ENCODE measurements at regions of chr16 and their contacts with region 1.

Region 1: DNA sequence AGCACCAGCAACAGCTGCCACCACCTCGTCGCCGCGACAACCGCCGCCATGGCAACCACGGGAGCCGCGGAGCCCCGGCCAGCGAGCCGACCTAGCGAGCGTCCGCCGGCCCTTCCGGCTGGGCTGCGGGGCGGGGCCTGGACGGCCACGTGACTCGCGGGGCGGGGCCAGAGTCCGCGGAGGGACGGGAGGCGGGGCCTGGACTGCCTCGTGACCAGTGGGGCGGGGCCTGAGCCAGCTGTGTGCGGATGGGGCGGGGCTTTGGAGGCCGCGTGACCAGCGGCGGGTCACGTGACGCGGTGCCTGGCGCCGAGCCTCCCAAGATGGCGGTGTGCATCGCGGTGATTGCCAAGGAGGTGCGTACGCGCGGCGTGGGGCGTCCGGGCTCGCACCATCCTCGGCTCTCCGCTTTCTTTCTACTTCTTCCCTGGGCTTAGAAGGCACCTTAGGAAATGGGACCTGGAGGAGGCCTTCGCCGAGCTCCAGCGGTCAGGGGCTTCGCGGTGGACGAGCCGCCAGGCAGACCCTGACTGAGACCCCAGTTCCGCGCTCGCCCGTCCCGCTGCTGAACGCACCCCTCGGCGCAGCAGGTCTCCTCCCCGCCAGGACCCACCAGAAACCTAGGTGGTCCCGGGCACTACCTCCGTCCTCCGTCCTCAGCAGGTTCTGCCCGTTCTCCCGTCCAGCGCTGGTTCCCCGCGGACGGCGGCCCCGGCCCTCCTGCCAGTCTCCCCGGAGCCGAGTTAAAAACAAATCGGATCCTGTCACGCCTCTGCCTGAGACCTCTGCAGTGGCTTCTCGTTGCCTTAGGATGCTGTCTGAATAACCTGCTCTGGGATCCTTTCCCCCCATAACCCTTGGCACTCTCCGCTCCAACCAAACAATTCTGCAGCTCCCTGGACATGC is at the starts of genes GALNS and TRAPPC2L:
- DNase-seq: peak; percentile 100
- ATAC-seq: peak; percentile 93
- H3K4me3 Mint-ChIP-seq: peak within 1 kb of the TSS; percentile 100
- H3K27ac Mint-ChIP-seq: peak within 1 kb of the TSS; percentile 97
- H3K4me1 Mint-ChIP-seq: peaks cover 22% of the 10 kb centered on the region
- H3K27me3 Mint-ChIP-seq: no peaks in the 10 kb centered on the region
- total RNA-seq, gene GALNS: 20.1 TPM
- total RNA-seq, gene TRAPPC2L: 43.3 to 50.7 TPM

Region 2: GRCh38 chr16:88662843-88663606 is 194.1 kb before region 1 on chr16 and contains the start of gene MVD:
- CTCF ChIA-PET with region 1: no interaction called
- POLR2A ChIA-PET with region 1: no interaction called
- intact Hi-C with region 1: loop called in 1 of 2 experiments (anchors 1 kb)
- DNase-seq: peak; percentile 98
- ATAC-seq: peak; percentile 99
- H3K4me3 Mint-ChIP-seq: peak within 1 kb of the TSS; percentile 92
- H3K27ac Mint-ChIP-seq: peak within 1 kb of the TSS; percentile 88
- H3K4me1 Mint-ChIP-seq: peaks cover 14% of the 10 kb centered on the region
- H3K27me3 Mint-ChIP-seq: no peaks in the 10 kb centered on the region
- total RNA-seq, gene MVD: 62.8 to 81.1 TPM

Region 3: DNA sequence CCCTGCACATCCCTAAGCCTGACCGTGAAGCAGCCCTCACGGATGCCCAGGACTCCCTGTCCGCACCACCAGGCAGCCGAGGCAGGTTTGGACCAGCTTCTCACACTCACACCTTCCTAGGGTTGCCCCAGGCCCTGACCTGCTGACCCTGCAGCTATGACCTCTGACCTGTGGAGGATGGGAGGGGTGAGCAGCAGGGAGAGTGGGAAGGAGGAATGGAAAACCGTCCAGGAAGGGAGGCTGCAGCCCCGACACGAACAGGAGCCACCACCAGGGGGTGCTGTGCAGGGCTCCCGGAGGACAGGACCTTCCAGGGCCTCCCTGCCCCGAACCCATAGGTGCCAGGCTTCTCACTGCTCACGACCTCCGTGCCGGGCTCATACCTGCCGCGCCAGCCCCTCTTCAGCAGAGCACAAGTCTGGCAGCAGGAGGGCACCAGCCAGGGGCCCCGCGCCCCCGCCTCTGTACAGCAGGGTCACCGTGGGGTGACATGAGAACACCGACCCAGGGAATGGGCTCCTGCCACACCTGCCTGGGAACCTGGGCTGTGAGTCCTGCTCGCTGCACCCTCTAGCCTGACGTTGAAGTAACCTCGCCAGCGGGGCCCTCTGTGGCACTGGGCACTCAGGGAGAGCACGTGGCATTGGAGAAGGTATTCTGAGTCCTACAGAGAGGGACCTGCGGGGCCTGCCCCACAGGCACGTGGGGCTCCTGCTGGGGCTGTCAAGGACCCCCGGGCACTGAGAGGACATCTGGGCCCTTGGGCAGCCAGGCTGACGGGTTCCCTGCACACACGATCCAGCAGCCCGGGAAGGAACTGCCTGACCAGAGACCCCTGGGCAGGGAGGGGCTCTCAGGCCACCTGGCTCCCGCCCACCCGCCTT is 113.1 kb before region 1 on chr16:
- CTCF ChIA-PET with region 1: interaction called, 3 read pairs
- POLR2A ChIA-PET with region 1: no interaction called
- intact Hi-C with region 1: loop called in 1 of 2 experiments (anchors 2 kb)
- DNase-seq: peak; percentile 86
- ATAC-seq: peak; percentile 32
- H3K4me3 Mint-ChIP-seq: no peak overlapping the region
- H3K27ac Mint-ChIP-seq: no peak overlapping the region
- H3K4me1 Mint-ChIP-seq: peaks cover 30% of the 10 kb centered on the region
- H3K27me3 Mint-ChIP-seq: no peaks in the 10 kb centered on the region

Region 4: DNA sequence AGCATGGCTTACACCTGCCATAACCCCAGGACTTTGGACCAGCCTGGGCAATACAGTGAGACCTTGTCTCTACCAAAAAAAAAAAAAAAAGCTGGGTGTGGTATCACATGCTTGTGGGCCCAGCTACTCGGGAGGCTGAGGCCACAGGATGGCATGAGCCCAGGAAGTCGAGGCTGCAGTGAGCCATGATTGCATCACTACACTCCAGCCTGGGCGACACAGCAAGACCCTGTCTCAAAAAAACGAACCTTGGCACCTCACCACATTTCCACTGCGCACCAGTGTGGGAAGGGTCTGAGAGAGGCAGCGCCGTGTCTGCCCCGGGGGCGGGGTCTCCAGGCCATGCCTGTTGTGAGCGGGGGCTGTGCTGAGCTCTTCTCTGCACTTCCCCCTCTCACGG is 242.8 kb after region 1 on chr16:
- CTCF ChIA-PET with region 1: interaction called, 5 read pairs
- POLR2A ChIA-PET with region 1: no interaction called
- intact Hi-C with region 1: loop called (anchors 5 kb)
- DNase-seq: peak; percentile 63
- ATAC-seq: no peak
- H3K4me3 Mint-ChIP-seq: peak overlapping the region; percentile 36
- H3K27ac Mint-ChIP-seq: peak overlapping the region; percentile 85
- H3K4me1 Mint-ChIP-seq: peaks cover 76% of the 10 kb centered on the region
- H3K27me3 Mint-ChIP-seq: no peaks in the 10 kb centered on the region

Region 5: DNA sequence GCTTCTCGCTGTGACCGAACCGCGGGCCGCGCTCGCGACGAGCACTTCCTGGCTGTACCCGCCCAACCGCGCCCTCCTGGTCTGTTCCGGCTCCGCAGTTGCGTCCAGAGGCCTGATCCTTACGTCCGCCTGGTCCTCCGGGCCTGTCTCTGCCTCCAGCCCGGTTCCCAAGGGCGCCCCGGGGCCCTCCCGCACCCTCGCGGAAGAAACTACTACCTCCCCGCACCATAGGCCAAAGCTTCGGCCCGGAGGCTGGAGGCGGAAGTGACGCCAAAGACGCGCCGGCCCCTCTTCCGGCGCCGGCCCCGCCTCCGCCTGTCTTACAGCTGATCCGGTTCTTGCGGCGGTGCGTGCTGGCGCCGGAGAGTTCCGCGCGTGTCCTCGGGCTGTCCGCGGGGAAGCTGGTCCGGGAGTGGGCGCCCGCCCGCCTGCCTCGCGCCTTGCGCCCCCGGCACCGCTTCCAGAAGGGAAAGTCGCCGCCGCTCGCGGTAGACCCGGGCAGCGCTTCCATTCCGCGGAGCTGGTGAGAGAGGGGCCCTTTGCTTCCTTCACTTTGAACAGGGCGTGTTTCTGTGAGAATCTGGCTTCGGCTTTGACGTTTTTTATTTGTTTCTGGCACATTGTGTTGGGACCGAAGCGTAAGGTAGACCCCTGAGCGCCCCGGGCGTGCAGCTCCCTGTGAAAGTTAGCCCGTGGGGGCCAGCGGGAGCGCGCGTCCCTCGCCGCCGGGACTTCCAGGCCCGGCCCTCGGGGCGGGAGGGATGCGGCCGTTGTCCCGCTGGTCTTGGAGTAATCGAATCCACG is 360.5 kb after region 1 on chr16 and contains the start of gene ZNF778:
- CTCF ChIA-PET with region 1: interaction called, 7 read pairs
- POLR2A ChIA-PET with region 1: no interaction called
- intact Hi-C with region 1: loop called in 1 of 2 experiments (anchors 1 kb)
- DNase-seq: peak; percentile 89
- ATAC-seq: peak; percentile 81
- H3K4me3 Mint-ChIP-seq: peak within 1 kb of the TSS; percentile 83
- H3K27ac Mint-ChIP-seq: peak within 1 kb of the TSS; percentile 93
- H3K4me1 Mint-ChIP-seq: peaks cover 19% of the 10 kb centered on the region
- H3K27me3 Mint-ChIP-seq: no peaks in the 10 kb centered on the region
- total RNA-seq, gene ZNF778: 4.7 to 5.0 TPM

Region 6: DNA sequence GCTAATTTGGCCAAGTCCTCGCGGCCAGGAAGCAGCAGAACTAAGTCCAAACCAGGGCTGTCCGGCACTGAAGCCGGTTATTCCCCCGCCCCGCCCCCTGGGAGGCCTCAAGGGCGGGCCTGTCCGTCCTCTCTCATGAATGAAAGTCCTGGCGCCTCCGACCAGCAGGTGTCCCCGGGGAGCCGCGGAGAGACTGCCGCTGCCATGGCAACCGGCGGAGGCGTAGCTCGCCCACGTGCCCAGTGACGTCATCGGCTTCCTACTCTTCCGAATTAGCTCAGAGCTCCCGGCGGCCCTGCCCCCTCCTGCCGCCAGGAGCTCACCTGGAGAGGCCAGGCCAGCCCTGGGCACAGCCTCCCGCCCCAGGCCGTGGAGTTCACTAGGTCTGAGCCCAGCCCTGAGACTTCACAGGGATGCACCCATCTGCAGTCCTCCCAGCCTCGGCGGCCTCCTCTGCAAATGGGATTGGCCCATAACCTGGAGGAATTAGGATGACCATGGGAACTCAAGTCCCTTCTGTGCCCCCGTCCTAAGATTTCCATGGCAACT is 843.1 kb after region 1 on chr16:
- CTCF ChIA-PET with region 1: no interaction called
- POLR2A ChIA-PET with region 1: no interaction called
- intact Hi-C with region 1: loop called in 1 of 2 experiments (anchors 2 kb)
- DNase-seq: peak; percentile 99
- ATAC-seq: peak; percentile 21
- H3K4me3 Mint-ChIP-seq: peak overlapping the region; percentile 71
- H3K27ac Mint-ChIP-seq: peak overlapping the region; percentile 25
- H3K4me1 Mint-ChIP-seq: peaks cover 13% of the 10 kb centered on the region
- H3K27me3 Mint-ChIP-seq: no peaks in the 10 kb centered on the region

Measured in activated CD4-positive, alpha-beta T cell treated with anti-CD3 and anti-CD28 coated beads for 36 hours (primary cell).